Activated CD8-positive, alpha-beta T cell treated with anti-CD3 and anti-CD28 coated beads for 36 hours (primary cell): ENCODE measurements at regions of chr1 and their contacts with region 1.

Region 1: GRCh38 chr1:23344111-23344986 is at the start of gene HNRNPR:
- DNase-seq: peak; percentile 100
- ATAC-seq: peak; percentile 97
- H3K4me3 Mint-ChIP-seq: peak within 1 kb of the TSS; percentile 93
- H3K27ac Mint-ChIP-seq: peak within 1 kb of the TSS; percentile 98
- H3K4me1 Mint-ChIP-seq: peaks cover 37% of the 10 kb centered on the region
- H3K27me3 Mint-ChIP-seq: no peaks in the 10 kb centered on the region
- CTCF ChIP-seq: no peak
- total RNA-seq, gene HNRNPR: 190 to 203 TPM

Region 2: GRCh38 chr1:23330846-23331245 is 13.5 kb before region 1 on chr1:
- CTCF ChIA-PET with region 1: interaction called, 6 read pairs
- POLR2A ChIA-PET with region 1: interaction called, 11 read pairs
- intact Hi-C with region 1: no loop called
- DNase-seq: no peak
- ATAC-seq: no peak
- H3K4me3 Mint-ChIP-seq: no peak overlapping the region
- H3K27ac Mint-ChIP-seq: peak overlapping the region; percentile 38
- H3K4me1 Mint-ChIP-seq: peaks cover 44% of the 10 kb centered on the region
- H3K27me3 Mint-ChIP-seq: no peaks in the 10 kb centered on the region
- CTCF ChIP-seq: no peak

Region 3: GRCh38 chr1:23367791-23368561 is 23.6 kb after region 1 on chr1:
- CTCF ChIA-PET with region 1: interaction called, 7 read pairs
- POLR2A ChIA-PET with region 1: interaction called, 44 read pairs
- intact Hi-C with region 1: loop called (anchors 2 kb)
- DNase-seq: peak; percentile 99
- ATAC-seq: peak; percentile 94
- H3K4me3 Mint-ChIP-seq: peak overlapping the region; percentile 95
- H3K27ac Mint-ChIP-seq: peak overlapping the region; percentile 98
- H3K4me1 Mint-ChIP-seq: peaks cover 26% of the 10 kb centered on the region
- H3K27me3 Mint-ChIP-seq: no peaks in the 10 kb centered on the region
- CTCF ChIP-seq: no peak

Region 4: GRCh38 chr1:23403735-23404486 is 59.6 kb after region 1 on chr1:
- CTCF ChIA-PET with region 1: interaction called, 18 read pairs
- POLR2A ChIA-PET with region 1: interaction called, 16 read pairs
- intact Hi-C with region 1: no loop called
- DNase-seq: peak; percentile 93
- ATAC-seq: peak; percentile 99
- H3K4me3 Mint-ChIP-seq: no peak overlapping the region
- H3K27ac Mint-ChIP-seq: no peak overlapping the region
- H3K4me1 Mint-ChIP-seq: peaks cover 4% of the 10 kb centered on the region
- H3K27me3 Mint-ChIP-seq: no peaks in the 10 kb centered on the region
- CTCF ChIP-seq: peak; percentile 87